IMR-90 (cell line): ENCODE measurements at regions of chr1 and their contacts with region 1.

Region 1: GRCh38 chr1:86380257-86380861 is 15.8 kb downstream of the ODF2L start:
- DNase-seq: peak; percentile 86
- ATAC-seq: peak; percentile 97
- H3K4me3 ChIP-seq: no peak overlapping the region
- H3K27ac ChIP-seq: no peak overlapping the region
- H3K4me1 ChIP-seq: no peaks in the 10 kb centered on the region
- H3K27me3 ChIP-seq: no peaks in the 10 kb centered on the region
- CTCF ChIP-seq: peak; percentile 79
- POLR2A ChIP-seq: no peak
- RAD21 ChIP-seq: peak; percentile 91

Region 2: DNA sequence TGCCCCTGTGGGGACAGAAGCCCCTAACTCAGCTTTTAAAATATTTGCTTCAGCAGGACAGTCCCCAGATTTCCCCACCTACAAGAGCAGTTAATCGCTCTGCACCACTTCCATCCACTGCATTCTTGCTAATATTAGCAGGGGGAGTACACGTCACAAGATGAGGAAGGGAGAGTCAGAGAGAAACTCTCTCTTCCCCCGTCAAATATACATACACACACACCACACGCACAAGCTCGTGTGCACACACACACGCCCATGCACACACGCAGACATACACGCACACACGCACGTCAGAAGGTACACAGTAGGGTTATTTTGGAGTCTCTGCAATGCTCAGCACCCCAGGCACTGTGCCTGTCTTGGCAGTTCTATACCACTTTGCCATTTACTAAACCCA is 90.5 kb after region 1 on chr1:
- CTCF ChIA-PET with region 1: interaction called, 3 read pairs
- POLR2A ChIA-PET with region 1: no interaction called
- dilution Hi-C with region 1: no loop called
- in situ Hi-C with region 1: no loop called
- intact Hi-C with region 1: loop called (anchors 2 kb)
- DNase-seq: no peak
- ATAC-seq: no peak
- H3K4me3 ChIP-seq: no peak overlapping the region
- H3K27ac ChIP-seq: no peak overlapping the region
- H3K4me1 ChIP-seq: 0 out of 2 replicates have a peak, but pooled peaks cover 3% of the 10 kb centered on the region
- H3K27me3 ChIP-seq: peaks cover 16% of the 10 kb centered on the region
- CTCF ChIP-seq: no peak
- POLR2A ChIP-seq: no peak
- RAD21 ChIP-seq: no peak

Region 3: GRCh38 chr1:86507935-86508582 is 127.7 kb after region 1 on chr1:
- CTCF ChIA-PET with region 1: interaction called, 4 read pairs
- POLR2A ChIA-PET with region 1: no interaction called
- dilution Hi-C with region 1: no loop called
- in situ Hi-C with region 1: no loop called
- intact Hi-C with region 1: loop called (anchors 2 kb)
- DNase-seq: peak; percentile 38
- ATAC-seq: peak; percentile 54; the same call in 1 of the 2 replicates
- H3K4me3 ChIP-seq: no peak overlapping the region
- H3K27ac ChIP-seq: no peak overlapping the region
- H3K4me1 ChIP-seq: peaks cover 2% of the 10 kb centered on the region
- H3K27me3 ChIP-seq: peaks cover 2% of the 10 kb centered on the region
- CTCF ChIP-seq: peak; percentile 41
- POLR2A ChIP-seq: no peak
- RAD21 ChIP-seq: no peak; the same call in 1 of the 2 replicates

Region 4: DNA sequence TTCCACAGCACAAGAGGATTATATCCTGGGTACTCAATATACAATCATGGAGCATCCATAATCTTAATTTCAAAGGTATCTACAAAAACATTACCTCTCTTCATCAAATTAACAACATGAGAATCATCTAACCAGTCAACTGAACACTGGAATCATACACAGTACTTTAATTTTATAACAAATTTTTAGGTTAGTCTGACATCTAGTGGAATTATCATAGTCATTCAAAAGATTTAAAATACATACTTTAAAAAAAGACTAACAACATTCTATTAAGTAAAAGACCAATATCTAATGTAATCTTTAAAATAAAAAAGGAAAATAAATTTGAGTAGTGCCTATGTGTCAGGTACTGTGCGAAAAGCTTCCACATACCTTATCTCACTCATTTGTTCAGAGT is 307.2 kb after region 1 on chr1:
- CTCF ChIA-PET with region 1: interaction called, 3 read pairs
- POLR2A ChIA-PET with region 1: no interaction called
- dilution Hi-C with region 1: no loop called
- in situ Hi-C with region 1: no loop called
- intact Hi-C with region 1: loop called (anchors 5 kb)
- DNase-seq: no peak
- ATAC-seq: peak; percentile 35; the same call in 1 of the 2 replicates
- H3K4me3 ChIP-seq: no peak overlapping the region
- H3K27ac ChIP-seq: no peak overlapping the region
- H3K4me1 ChIP-seq: no peaks in the 10 kb centered on the region
- H3K27me3 ChIP-seq: peaks cover 1% of the 10 kb centered on the region; the same call in 1 of the 2 replicates
- CTCF ChIP-seq: 0 out of 2 replicates have a peak, but pooled peaks have one; percentile 13
- POLR2A ChIP-seq: no peak
- RAD21 ChIP-seq: no peak; the same call in 1 of the 2 replicates

Region 5: DNA sequence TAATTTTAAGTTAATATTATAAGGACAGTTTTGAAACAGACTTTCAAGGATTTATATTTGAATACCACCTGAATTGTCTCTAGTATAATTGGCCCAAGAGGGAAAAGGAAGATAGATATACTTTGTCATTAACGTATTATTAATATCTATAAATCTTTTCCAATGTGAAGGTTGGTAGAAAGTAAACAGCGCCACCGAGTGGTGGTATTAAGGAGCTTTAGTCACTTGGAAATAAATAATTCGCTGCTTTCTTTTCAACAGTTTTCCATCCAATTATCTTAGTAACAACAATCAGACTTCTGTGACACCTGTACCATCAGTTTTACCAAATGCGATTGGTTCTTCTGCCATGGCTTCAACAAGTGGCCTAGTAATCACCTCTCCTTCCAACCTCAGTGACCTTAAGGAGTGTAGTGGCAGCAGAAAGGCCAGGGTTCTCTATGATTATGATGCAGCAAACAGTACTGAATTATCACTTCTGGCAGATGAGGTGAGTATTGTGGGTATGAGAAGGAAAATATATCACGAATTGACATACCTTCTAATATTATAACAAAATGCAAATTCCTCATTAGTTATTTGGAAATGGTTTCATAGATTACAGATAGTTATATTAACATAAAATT is 361.7 kb after region 1 on chr1:
- CTCF ChIA-PET with region 1: no interaction called
- POLR2A ChIA-PET with region 1: no interaction called
- dilution Hi-C with region 1: no loop called
- in situ Hi-C with region 1: no loop called
- intact Hi-C with region 1: loop called (anchors 1 kb)
- DNase-seq: peak; percentile 39
- ATAC-seq: no peak
- H3K4me3 ChIP-seq: no peak overlapping the region
- H3K27ac ChIP-seq: no peak overlapping the region
- H3K4me1 ChIP-seq: no peaks in the 10 kb centered on the region
- H3K27me3 ChIP-seq: no peaks in the 10 kb centered on the region
- CTCF ChIP-seq: peak; percentile 66
- POLR2A ChIP-seq: no peak
- RAD21 ChIP-seq: peak; percentile 49

Region 6: DNA sequence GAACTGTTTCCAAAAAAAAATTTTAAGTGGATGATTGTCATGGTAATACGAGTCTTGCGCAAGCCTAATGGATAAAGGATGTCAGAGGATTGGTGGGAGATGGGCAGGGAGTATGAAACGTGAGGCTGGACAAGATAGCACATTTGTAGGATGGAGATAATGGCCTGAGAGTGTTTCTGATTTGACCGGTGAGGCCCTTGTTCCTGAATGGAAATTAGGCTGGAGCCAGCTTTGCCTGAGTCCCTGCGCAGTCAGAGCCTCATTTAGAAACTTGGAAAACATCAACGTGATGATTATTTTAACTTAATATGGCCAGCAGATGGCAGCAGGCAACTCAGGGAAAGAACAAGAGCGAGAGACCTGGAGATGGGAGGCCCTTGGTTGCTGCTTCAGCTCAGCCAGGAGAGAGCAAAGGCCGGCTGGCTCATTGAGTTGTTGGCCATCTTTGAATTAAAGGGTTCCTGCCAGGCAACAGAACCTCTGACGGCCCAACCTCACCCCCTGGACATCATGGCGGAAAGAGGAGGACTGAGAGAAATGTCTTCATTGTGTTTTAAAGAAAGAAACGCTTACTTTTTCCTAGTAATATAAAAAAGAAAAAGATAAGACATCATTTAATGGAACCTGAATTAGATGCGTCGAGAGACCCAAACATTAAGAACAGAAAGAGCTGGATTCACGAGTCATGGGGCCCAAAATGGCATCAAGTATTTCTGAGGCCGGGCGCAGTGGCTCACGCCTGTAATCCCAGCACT is 453.3 kb after region 1 on chr1:
- CTCF ChIA-PET with region 1: no interaction called
- POLR2A ChIA-PET with region 1: no interaction called
- dilution Hi-C with region 1: no loop called
- in situ Hi-C with region 1: no loop called
- intact Hi-C with region 1: loop called (anchors 5 kb)
- DNase-seq: peak; percentile 87
- ATAC-seq: peak; percentile 97
- H3K4me3 ChIP-seq: no peak overlapping the region
- H3K27ac ChIP-seq: no peak overlapping the region
- H3K4me1 ChIP-seq: no peaks in the 10 kb centered on the region
- H3K27me3 ChIP-seq: no peaks in the 10 kb centered on the region
- CTCF ChIP-seq: peak; percentile 79
- POLR2A ChIP-seq: no peak
- RAD21 ChIP-seq: peak; percentile 81